Activated naive CD4-positive, alpha-beta T cell treated with anti-CD3 and anti-CD28 coated beads for 36 hours (primary cell): ENCODE measurements at regions of chr17 and their contacts with region 1.

Region 1: GRCh38 chr17:76506408-76507349 is 5.5 kb upstream of the RHBDF2 start:
- DNase-seq: peak; percentile 94
- H3K4me3 Mint-ChIP-seq: no peak overlapping the region
- H3K27ac Mint-ChIP-seq: no peak overlapping the region
- H3K4me1 Mint-ChIP-seq: peaks cover 7% of the 10 kb centered on the region
- H3K27me3 Mint-ChIP-seq: peaks cover 2% of the 10 kb centered on the region

Region 2: GRCh38 chr17:76307299-76307965 is 199.2 kb before region 1 on chr17:
- CTCF ChIA-PET with region 1: interaction called, 3 read pairs
- intact Hi-C with region 1: loop called (anchors 2 kb)
- DNase-seq: no peak
- H3K4me3 Mint-ChIP-seq: no peak overlapping the region
- H3K27ac Mint-ChIP-seq: no peak overlapping the region
- H3K4me1 Mint-ChIP-seq: no peaks in the 10 kb centered on the region
- H3K27me3 Mint-ChIP-seq: no peaks in the 10 kb centered on the region

Region 3: GRCh38 chr17:76408052-76408849 is 98.4 kb before region 1 on chr17:
- CTCF ChIA-PET with region 1: interaction called, 22 read pairs
- intact Hi-C with region 1: loop called (anchors 1 kb)
- DNase-seq: peak; percentile 86
- H3K4me3 Mint-ChIP-seq: no peak overlapping the region
- H3K27ac Mint-ChIP-seq: no peak overlapping the region
- H3K4me1 Mint-ChIP-seq: peaks cover 8% of the 10 kb centered on the region
- H3K27me3 Mint-ChIP-seq: no peaks in the 10 kb centered on the region

Region 4: GRCh38 chr17:76458580-76459490 is 47.8 kb before region 1 on chr17:
- CTCF ChIA-PET with region 1: interaction called, 58 read pairs
- intact Hi-C with region 1: no loop called
- DNase-seq: peak; percentile 35
- H3K4me3 Mint-ChIP-seq: no peak overlapping the region
- H3K27ac Mint-ChIP-seq: no peak overlapping the region
- H3K4me1 Mint-ChIP-seq: no peaks in the 10 kb centered on the region
- H3K27me3 Mint-ChIP-seq: no peaks in the 10 kb centered on the region

Region 5: DNA sequence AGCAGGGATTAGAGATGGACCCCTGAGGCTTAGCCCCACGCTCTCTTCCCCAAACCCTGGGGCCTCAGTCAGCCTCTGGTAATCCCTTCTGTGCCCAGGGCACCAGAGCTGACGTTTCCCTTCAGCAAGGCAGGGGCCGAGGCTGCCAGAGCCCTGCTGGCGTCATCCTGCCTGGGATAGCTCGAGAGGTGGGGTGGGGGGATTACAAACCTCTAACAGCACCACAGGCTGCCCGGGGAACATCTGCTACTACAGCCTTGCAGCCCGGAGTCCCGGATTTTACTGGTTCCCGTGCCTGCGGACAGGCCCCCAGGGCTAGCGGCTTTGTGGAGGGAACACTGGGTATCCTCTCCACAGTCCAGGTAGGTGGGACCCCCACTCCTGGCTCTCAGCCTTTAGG is 39.3 kb before region 1 on chr17 and contains the start of gene AANAT:
- CTCF ChIA-PET with region 1: interaction called, 58 read pairs
- intact Hi-C with region 1: loop called (anchors 1 kb)
- DNase-seq: no peak
- H3K4me3 Mint-ChIP-seq: no peak within 1 kb of the TSS
- H3K27ac Mint-ChIP-seq: no peak within 1 kb of the TSS
- H3K4me1 Mint-ChIP-seq: peaks cover 2% of the 10 kb centered on the region
- H3K27me3 Mint-ChIP-seq: no peaks in the 10 kb centered on the region
- total RNA-seq, gene AANAT: not detected

Region 6: DNA sequence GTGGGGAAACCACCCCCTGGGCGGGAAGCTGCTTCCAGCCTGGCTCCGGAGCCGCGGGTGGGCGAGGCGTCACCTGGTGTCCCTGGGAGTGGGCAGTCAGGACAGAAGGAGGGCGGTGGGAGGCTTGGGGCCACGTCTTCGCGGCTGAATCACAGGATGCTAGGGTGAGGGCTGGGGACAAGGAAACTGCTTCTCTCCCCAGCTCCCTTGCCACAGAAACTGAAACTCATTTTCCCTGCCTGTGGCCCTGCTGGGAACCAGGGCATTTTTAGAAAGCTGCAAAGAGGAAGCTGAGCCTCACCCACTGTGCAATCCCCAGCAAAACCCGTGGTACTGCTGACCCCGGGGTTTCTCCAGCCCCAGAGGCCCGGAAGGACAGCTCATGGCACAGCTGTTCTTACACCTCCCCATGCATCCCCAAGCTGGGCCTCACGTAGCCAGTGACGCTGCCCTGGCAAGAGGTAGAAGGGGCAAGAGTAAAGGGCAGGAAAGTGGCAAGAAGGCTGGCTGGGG is 13.6 kb before region 1 on chr17:
- CTCF ChIA-PET with region 1: interaction called, 11 read pairs
- intact Hi-C with region 1: loop called (anchors 1 kb)
- DNase-seq: peak; percentile 83
- H3K4me3 Mint-ChIP-seq: peak overlapping the region; percentile 58
- H3K27ac Mint-ChIP-seq: peak overlapping the region; percentile 77
- H3K4me1 Mint-ChIP-seq: peaks cover 31% of the 10 kb centered on the region
- H3K27me3 Mint-ChIP-seq: no peaks in the 10 kb centered on the region

Region 7: DNA sequence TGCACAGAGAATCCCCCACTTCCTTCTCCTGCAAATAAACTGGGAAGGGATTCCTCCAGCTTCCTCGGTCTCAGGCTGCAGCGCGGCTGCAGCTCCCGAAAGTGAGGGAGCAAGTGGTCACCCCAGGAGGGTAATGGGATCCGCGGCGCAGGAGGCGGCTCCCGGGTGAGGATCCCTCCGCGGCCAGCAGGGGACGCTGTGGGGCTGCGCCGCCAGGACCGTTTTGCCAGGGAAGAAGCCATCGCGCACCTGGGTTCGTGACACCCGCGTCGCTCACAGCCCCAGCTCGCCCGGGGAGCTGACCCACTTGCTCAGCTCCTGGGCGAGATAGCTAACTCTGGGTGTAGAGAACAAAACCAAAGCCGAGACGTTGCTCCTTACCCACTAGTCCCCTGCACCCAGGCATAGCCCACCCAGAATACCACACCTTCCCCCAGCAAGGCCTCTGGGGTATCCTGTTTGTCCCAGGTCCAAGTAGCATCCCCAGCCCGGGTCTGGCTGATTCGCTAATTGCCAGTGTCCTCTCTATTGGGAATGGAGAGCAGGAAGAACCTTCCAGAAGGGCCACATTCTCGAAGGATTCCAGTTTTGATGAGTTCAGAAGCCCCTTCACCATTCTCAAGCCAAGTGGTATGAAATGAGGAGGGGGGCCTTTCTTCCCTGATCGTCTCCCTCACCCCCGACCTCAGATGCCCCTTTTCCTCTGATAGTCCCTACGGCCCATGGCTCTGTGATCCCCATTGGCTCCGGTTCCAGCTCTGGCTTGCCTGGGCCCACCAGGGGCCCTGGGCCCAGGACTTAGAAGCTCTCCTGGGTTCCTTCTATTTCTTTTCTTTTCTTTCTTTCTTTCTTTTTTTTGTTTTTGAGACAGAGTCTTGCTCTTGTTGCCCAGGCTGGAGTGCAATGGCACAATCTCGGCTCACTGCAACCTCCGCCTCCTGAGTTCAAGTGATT is 16.7 kb after region 1 on chr17:
- CTCF ChIA-PET with region 1: interaction called, 19 read pairs
- intact Hi-C with region 1: no loop called
- DNase-seq: peak; percentile 84
- H3K4me3 Mint-ChIP-seq: peak overlapping the region; percentile 19
- H3K27ac Mint-ChIP-seq: no peak overlapping the region
- H3K4me1 Mint-ChIP-seq: peaks cover 17% of the 10 kb centered on the region
- H3K27me3 Mint-ChIP-seq: no peaks in the 10 kb centered on the region

Region 8: DNA sequence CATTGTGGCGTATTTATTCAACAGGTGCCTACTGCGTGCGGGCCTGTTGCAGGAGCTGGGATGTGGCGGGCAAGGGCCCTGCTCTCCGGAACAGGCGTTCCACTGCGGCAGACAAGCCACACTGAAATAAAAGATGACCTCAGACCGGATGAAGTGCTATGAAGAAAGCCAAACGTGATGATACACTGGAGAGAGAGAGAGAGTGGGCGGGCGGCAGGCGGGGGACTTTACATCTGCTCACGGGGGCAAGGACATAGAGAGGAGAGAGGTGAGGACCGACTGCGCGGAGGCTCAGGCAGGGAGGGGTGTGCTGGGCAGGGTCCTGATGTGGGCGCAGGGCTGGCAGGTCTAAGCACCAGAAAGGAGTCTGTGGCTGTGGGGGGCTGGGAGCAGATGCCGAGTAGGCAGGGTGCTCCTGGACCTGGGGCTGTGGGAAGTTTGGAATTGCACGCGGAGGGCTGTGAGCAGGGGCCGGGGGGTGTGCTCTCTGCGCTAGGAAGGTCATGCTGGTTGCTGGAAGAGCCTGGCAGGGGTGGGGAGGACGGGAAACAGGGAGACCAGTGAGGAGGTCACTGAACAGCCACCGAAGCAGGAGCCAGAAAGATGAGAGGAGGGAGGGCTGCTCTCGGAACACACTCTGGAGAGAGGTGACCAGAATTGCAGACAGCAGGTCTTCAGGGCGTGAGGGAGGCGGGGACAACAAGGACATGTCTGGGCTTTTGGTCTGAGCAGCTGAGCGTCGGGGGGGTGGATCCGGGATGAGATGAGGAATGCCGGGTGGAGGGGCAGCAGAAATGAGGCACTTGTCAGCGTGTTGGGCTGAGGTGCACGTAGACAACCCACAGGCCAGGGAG is 194.2 kb after region 1 on chr17:
- CTCF ChIA-PET with region 1: no interaction called
- intact Hi-C with region 1: no loop called
- DNase-seq: no peak
- H3K4me3 Mint-ChIP-seq: no peak overlapping the region
- H3K27ac Mint-ChIP-seq: no peak overlapping the region
- H3K4me1 Mint-ChIP-seq: no peaks in the 10 kb centered on the region
- H3K27me3 Mint-ChIP-seq: no peaks in the 10 kb centered on the region